Right lobe of liver (tissue), 6 donors: ENCODE measurements at regions of chr1 and their contacts with region 1.

Region 1: DNA sequence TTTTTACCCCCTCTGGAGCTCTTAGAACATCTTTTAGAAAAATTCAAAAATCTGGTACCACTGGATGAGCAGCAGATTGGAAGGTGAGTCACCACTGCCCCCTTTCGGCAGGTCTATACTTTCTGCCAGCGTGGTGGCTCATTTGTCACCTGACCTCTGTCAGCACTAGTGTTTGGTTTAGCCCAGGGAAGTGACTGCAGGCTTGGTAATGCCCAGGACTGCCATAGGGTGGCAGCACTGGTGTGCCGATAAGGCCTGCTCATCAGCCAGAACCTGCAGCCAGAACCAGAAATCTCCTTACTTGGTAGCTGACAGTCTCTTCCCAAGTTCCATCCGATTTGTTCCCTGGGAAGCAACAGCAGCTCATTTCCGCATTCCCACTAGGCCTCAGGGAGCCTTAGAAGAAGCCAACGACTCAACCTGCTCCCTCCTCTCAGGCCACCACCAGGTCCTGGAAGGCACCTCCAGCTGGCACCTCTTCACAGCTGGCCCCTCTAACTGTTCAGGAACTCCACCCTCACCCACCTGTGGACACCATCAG is 6.8 kb downstream of the SMIM12 start:
- DNase-seq: peak; percentile 85 to 92 (median 91)
- ATAC-seq: peak; percentile 99 to 100 (median 100)
- H3K4me3 ChIP-seq: no peak overlapping the region
- H3K27ac ChIP-seq: peak overlapping the region in 1 of 3 donors; percentile 9
- H3K4me1 ChIP-seq: peaks cover 0 to 24% (median 7%) of the 10 kb centered on the region in 4 donors
- H3K27me3 ChIP-seq: no peaks in the 10 kb centered on the region
- CTCF ChIP-seq: peak; percentile 97 to 100 (median 99)
- POLR2A ChIP-seq: no peak

Region 2: GRCh38 chr1:34786521-34787325 is 66.0 kb before region 1 on chr1:
- intact Hi-C with region 1: loop called in 1 of 2 experiments (anchors 5 kb)
- DNase-seq: peak; percentile 69 to 82 (median 80)
- ATAC-seq: peak; percentile 82 to 89 (median 87)
- H3K4me3 ChIP-seq: no peak overlapping the region
- H3K27ac ChIP-seq: peak overlapping the region in 2 of 3 donors; percentile 17 to 57
- H3K4me1 ChIP-seq: peaks cover 0 to 22% (median 10%) of the 10 kb centered on the region in 4 donors
- H3K27me3 ChIP-seq: no peaks in the 10 kb centered on the region
- CTCF ChIP-seq: peak; percentile 83 to 89 (median 86)
- POLR2A ChIP-seq: no peak